CD14-positive monocyte (primary cell): ENCODE measurements at regions of chr13 and their contacts with region 1.

Region 1: GRCh38 chr13:23375001-23375971 is 58.2 kb downstream of the SACS start:
- DNase-seq: peak; percentile 92 to 94 (median 93)
- H3K4me3 ChIP-seq: peak overlapping the region; percentile 48 to 93 (median 82)
- H3K4me3 Mint-ChIP-seq: peak overlapping the region; percentile 81 to 82
- H3K27ac ChIP-seq: peak overlapping the region in 1 of 2 donors; percentile 70
- H3K27ac Mint-ChIP-seq: peak overlapping the region in 2 of 7 donors; percentile 50 to 64
- H3K4me1 ChIP-seq: peaks cover 29 to 47% of the 10 kb centered on the region in 2 donors
- H3K4me1 Mint-ChIP-seq: peaks cover 49% of the 10 kb centered on the region
- H3K27me3 ChIP-seq: no peaks in the 10 kb centered on the region
- H3K27me3 Mint-ChIP-seq: peaks cover 0 to 3% (median 0%) of the 10 kb centered on the region in 3 donors
- CTCF ChIP-seq: no peak

Region 2: DNA sequence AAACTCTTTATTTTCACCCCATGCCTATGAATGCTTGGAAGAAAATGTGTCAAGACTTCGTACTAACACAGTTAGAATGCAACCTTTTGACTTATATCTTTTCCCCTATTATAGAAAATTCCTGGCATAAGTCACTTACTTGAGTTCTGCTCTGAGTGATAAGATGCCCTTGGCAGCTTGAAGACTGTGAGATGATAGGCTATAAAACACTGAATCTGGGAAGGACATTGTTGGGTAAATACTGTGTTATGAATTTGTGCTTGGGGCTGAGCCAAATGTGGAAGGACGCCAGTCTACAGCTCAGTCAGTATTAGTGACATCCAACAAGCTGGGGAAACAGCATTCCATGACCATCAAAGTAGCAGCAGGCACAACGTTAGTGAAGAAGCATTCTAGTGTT is 562.5 kb before region 1 on chr13:
- intact Hi-C with region 1: no loop called
- DNase-seq: no peak
- H3K4me3 ChIP-seq: no peak overlapping the region
- H3K4me3 Mint-ChIP-seq: no peak overlapping the region
- H3K27ac ChIP-seq: no peak overlapping the region
- H3K27ac Mint-ChIP-seq: no peak overlapping the region
- H3K4me1 ChIP-seq: no peaks in the 10 kb centered on the region
- H3K4me1 Mint-ChIP-seq: no peaks in the 10 kb centered on the region
- H3K27me3 ChIP-seq: no peaks in the 10 kb centered on the region
- H3K27me3 Mint-ChIP-seq: peaks cover 0 to 7% (median 1%) of the 10 kb centered on the region in 3 donors
- CTCF ChIP-seq: no peak

Region 3: GRCh38 chr13:23579072-23579895 is 204.0 kb after region 1 on chr13:
- intact Hi-C with region 1: loop called in 1 of 2 experiments (anchors 5 kb)
- DNase-seq: peak; percentile 74 to 81 (median 80)
- H3K4me3 ChIP-seq: peak overlapping the region; percentile 49 to 87 (median 87)
- H3K4me3 Mint-ChIP-seq: peak overlapping the region; percentile 79 to 90
- H3K27ac ChIP-seq: peak overlapping the region in 1 of 2 donors; percentile 71
- H3K27ac Mint-ChIP-seq: peak overlapping the region in 4 of 7 donors; percentile 37 to 50 (median 46)
- H3K4me1 ChIP-seq: peaks cover 14 to 16% of the 10 kb centered on the region in 2 donors
- H3K4me1 Mint-ChIP-seq: peaks cover 12% of the 10 kb centered on the region
- H3K27me3 ChIP-seq: peaks cover 17 to 35% of the 10 kb centered on the region in 2 donors
- H3K27me3 Mint-ChIP-seq: peaks cover 30 to 48% (median 44%) of the 10 kb centered on the region in 3 donors
- CTCF ChIP-seq: no peak

Region 4: GRCh38 chr13:23871616-23872220 is 496.4 kb after region 1 on chr13:
- intact Hi-C with region 1: loop called in 1 of 2 experiments (anchors 10 kb)
- DNase-seq: no peak
- H3K4me3 ChIP-seq: no peak overlapping the region
- H3K4me3 Mint-ChIP-seq: no peak overlapping the region
- H3K27ac ChIP-seq: no peak overlapping the region
- H3K27ac Mint-ChIP-seq: no peak overlapping the region
- H3K4me1 ChIP-seq: no peaks in the 10 kb centered on the region
- H3K4me1 Mint-ChIP-seq: no peaks in the 10 kb centered on the region
- H3K27me3 ChIP-seq: no peaks in the 10 kb centered on the region
- H3K27me3 Mint-ChIP-seq: peaks cover 0 to 2% (median 0%) of the 10 kb centered on the region in 3 donors
- CTCF ChIP-seq: peak; percentile 74

Region 5: GRCh38 chr13:23899555-23899954 is 524.3 kb after region 1 on chr13:
- intact Hi-C with region 1: loop called in 1 of 2 experiments (anchors 10 kb)
- DNase-seq: no peak
- H3K4me3 ChIP-seq: no peak overlapping the region
- H3K4me3 Mint-ChIP-seq: no peak overlapping the region
- H3K27ac ChIP-seq: no peak overlapping the region
- H3K27ac Mint-ChIP-seq: no peak overlapping the region
- H3K4me1 ChIP-seq: peaks cover 5 to 7% of the 10 kb centered on the region in 2 donors
- H3K4me1 Mint-ChIP-seq: peaks cover 8% of the 10 kb centered on the region
- H3K27me3 ChIP-seq: peaks cover 32 to 33% of the 10 kb centered on the region in 2 donors
- H3K27me3 Mint-ChIP-seq: peaks cover 31 to 41% (median 35%) of the 10 kb centered on the region in 3 donors
- CTCF ChIP-seq: peak; percentile 66

Region 6: DNA sequence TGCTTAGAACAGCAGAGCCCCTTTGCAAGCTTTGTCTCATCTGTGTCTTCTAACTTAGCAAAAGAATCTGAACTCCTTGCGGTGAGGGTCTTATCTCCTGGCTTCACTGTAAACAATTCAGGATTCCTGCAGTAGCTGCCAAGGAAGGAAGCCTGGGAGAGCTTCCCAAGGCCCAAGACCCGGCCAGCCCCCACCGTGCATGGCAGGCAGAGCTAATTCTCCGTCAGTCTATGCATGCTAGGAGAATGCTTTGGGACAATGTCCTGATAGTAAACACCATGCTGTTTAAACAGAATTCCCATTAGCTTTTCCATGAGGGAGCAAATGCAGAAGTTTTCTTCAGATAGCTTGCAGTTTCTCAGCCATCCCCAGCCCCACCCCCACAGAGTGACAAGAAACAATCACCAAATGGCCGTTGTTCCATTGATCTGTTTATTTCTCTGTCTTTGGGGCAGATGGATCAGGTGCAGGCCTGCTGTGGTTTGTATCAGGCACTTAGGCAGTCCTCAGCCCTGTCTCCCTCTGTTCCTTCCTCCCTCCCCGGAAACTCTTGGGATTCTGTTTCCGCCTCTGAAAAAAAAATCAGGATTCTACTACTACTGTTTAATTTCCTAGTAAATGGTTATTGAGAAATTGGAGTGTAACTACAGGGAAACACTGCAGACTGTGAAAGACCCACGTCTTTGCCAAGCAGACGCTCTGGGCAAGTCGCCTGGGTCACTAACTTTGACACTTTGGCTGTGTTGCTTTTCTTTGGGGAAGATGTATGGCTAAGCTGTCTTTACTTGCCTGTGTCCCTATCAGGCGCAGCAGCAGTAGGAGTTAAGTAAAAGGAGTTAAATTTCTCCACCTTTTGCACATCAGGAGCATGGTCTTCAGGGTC is 744.6 kb after region 1 on chr13:
- intact Hi-C with region 1: no loop called
- DNase-seq: no peak
- H3K4me3 ChIP-seq: no peak overlapping the region
- H3K4me3 Mint-ChIP-seq: no peak overlapping the region
- H3K27ac ChIP-seq: no peak overlapping the region
- H3K27ac Mint-ChIP-seq: no peak overlapping the region
- H3K4me1 ChIP-seq: no peaks in the 10 kb centered on the region
- H3K4me1 Mint-ChIP-seq: peaks cover 4% of the 10 kb centered on the region
- H3K27me3 ChIP-seq: no peaks in the 10 kb centered on the region
- H3K27me3 Mint-ChIP-seq: peaks cover 0 to 3% (median 1%) of the 10 kb centered on the region in 3 donors
- CTCF ChIP-seq: no peak

Region 7: GRCh38 chr13:24159357-24159756 is 784.1 kb after region 1 on chr13:
- intact Hi-C with region 1: loop called in 1 of 2 experiments (anchors 10 kb)
- DNase-seq: no peak
- H3K4me3 ChIP-seq: no peak overlapping the region
- H3K4me3 Mint-ChIP-seq: no peak overlapping the region
- H3K27ac ChIP-seq: no peak overlapping the region
- H3K27ac Mint-ChIP-seq: no peak overlapping the region
- H3K4me1 ChIP-seq: peaks cover 18 to 23% of the 10 kb centered on the region in 2 donors
- H3K4me1 Mint-ChIP-seq: peaks cover 18% of the 10 kb centered on the region
- H3K27me3 ChIP-seq: peaks cover 10 to 13% of the 10 kb centered on the region in 2 donors
- H3K27me3 Mint-ChIP-seq: peaks cover 17 to 20% (median 20%) of the 10 kb centered on the region in 3 donors
- CTCF ChIP-seq: no peak

Region 8: GRCh38 chr13:24922745-24923591 is 1547.7 kb after region 1 on chr13:
- intact Hi-C with region 1: loop called in 1 of 2 experiments (anchors 10 kb)
- DNase-seq: peak; percentile 93 to 96 (median 96)
- H3K4me3 ChIP-seq: peak overlapping the region; percentile 74 to 94 (median 90)
- H3K4me3 Mint-ChIP-seq: peak overlapping the region; percentile 96 to 98
- H3K27ac ChIP-seq: peak overlapping the region; percentile 97 to 99
- H3K27ac Mint-ChIP-seq: peak overlapping the region; percentile 97 to 99 (median 98)
- H3K4me1 ChIP-seq: peaks cover 8 to 12% of the 10 kb centered on the region in 2 donors
- H3K4me1 Mint-ChIP-seq: peaks cover 12% of the 10 kb centered on the region
- H3K27me3 ChIP-seq: no peaks in the 10 kb centered on the region
- H3K27me3 Mint-ChIP-seq: no peaks in the 10 kb centered on the region
- CTCF ChIP-seq: no peak